ENCODE measurements at regions of chr19 and their contacts with region 1.

Region 1: DNA sequence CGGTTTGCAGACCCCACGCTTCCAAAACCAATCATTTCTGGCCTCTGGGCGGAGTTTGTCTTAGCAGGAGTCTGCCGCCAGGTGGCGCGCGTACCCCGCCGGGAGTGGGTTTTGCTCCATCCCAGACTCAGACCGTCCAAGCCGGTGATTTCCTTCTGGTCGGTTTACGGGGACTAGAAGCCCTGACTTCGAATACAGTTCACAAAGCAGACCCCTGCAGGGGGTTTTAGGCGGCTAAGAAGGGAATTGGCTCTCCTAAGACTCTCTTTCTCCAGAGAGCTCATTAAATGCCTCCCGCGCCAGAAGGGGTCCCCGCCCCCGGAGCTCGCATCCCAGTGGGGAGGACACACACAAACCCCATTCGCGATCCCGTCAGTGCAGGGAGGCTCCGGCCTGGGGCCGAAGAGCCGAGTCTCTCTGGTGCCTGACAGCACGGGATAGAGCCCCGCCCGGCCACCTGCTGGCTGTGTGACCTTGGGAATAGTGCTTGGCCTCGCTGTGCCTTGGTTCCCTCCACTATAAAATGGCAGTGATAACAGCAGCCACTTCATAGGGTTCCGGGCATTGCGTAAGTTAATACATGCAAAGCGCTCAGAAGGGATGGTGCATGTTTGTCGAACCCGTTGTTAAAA is 8.6 kb upstream of the NUP62 start:
- DNase-seq: peak; percentile 69 to 78
- H3K4me3 ChIP-seq: no peak overlapping the region
- H3K27ac ChIP-seq: no peak overlapping the region
- H3K4me1 ChIP-seq: peaks cover 4 to 5% of the 10 kb centered on the region in 2 donors
- H3K27me3 ChIP-seq: no peaks in the 10 kb centered on the region
- CTCF ChIP-seq: peak; percentile 91 to 97 (median 94)
- POLR2A ChIP-seq: no peak

Region 2: GRCh38 chr19:49877020-49877878 is 60.6 kb before region 1 on chr19 and contains the starts of genes AKT1S1 and TBC1D17:
- intact Hi-C with region 1: no loop called
- DNase-seq: peak; percentile 99
- H3K4me3 ChIP-seq: peak within 1 kb of the TSS; percentile 65 to 99 (median 96)
- H3K27ac ChIP-seq: peak within 1 kb of the TSS; percentile 98 to 100 (median 98)
- H3K4me1 ChIP-seq: peaks cover 15 to 19% of the 10 kb centered on the region in 2 donors
- H3K27me3 ChIP-seq: no peaks in the 10 kb centered on the region
- CTCF ChIP-seq: no peak
- POLR2A ChIP-seq: peak; percentile 90 to 93
- total RNA-seq, gene AKT1S1: 16.7 to 26.0 (median 21.5) TPM
- total RNA-seq, gene TBC1D17: 28.5 to 41.9 (median 39.7) TPM

Region 3: DNA sequence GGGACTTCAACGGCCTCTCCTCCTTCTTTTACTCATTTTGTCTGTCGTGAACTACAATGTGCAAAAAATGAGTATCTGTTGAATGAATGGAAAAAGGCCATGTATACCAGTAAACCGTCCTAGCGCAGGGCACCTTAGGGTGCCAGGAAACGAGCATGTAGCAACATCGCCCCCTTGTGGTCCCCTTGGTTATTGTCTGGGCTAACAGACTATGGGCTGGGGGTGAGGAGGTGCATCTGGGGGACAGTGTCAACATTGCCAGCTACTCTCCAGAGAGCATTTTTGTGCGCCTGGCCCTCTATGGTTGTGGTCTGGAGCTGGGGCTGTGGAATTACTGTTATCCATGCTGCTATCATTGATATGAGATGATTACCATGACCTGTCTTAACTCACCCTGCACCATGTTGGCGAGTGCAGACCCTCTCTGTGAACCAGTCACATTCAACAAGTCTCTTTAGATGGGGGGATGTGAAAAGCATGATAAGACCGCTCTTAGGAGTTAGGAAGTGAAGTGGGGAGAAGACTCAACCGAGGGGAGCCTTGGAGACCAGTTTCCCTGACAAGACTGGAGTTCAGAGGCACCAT is 45.9 kb after region 1 on chr19:
- intact Hi-C with region 1: loop called (anchors 2 kb)
- DNase-seq: peak; percentile 59 to 66
- H3K4me3 ChIP-seq: no peak overlapping the region
- H3K27ac ChIP-seq: no peak overlapping the region
- H3K4me1 ChIP-seq: no peaks in the 10 kb centered on the region
- H3K27me3 ChIP-seq: no peaks in the 10 kb centered on the region
- CTCF ChIP-seq: peak; percentile 67 to 89 (median 83)
- POLR2A ChIP-seq: no peak